ENCODE measurements at regions of chr1 and their contacts with region 1.

Region 1: DNA sequence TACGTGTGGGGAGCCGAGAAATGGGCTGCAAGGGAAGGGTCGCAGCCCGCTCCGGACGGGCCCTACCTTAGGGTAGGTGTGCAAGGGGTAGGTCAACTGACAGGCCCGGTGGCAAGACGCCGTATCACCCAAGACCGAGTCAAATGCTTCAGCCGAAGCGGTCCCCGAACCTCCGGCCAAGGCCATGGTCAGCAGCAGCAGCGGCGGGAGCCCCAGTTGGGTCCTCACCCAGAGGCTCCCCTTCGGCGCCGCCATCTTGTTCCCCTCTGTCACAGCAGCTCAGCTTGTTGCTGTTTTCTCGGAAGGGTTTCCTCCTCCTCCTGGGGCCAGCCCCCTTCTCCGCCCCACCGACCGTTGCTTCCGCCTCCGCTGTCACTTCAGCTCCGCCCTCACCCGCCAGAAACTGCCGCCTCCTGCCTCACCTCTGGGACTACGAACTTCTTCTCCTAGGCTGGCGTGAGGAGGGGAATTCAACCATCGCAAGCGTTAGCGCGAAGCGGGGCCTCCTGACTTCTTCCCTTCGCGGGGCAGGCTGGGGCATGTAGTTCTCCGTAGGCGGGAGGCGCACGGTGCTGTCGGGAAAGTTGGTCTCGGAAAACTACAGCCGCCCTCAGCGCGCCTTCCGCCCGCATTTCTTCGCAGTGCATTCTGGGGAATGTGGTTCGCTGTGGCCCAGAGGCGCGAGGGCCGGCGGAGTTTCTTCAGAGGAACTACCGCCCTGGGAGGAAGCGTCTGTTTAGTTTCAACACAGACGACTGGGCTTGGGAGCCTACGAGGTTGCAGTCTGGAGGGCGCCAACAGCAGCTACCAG is at the starts of genes TCEANC2 and TMEM59:
- DNase-seq: peak; percentile 97 to 98
- ATAC-seq: peak; percentile 93 to 94
- H3K4me3 ChIP-seq: peak within 1 kb of the TSS; percentile 82 to 99 (median 96)
- H3K27ac ChIP-seq: peak within 1 kb of the TSS; percentile 98 to 99 (median 98)
- H3K4me1 ChIP-seq: peaks cover 49% of the 10 kb centered on the region in 2 donors
- H3K27me3 ChIP-seq: no peaks in the 10 kb centered on the region
- CTCF ChIP-seq: peak in 1 of 5 experiments; percentile 10
- POLR2A ChIP-seq: peak; percentile 80 to 85
- total RNA-seq, gene TCEANC2: 2.6 to 9.5 (median 7.0) TPM
- total RNA-seq, gene TMEM59: 156 to 248 (median 224) TPM

Region 2: DNA sequence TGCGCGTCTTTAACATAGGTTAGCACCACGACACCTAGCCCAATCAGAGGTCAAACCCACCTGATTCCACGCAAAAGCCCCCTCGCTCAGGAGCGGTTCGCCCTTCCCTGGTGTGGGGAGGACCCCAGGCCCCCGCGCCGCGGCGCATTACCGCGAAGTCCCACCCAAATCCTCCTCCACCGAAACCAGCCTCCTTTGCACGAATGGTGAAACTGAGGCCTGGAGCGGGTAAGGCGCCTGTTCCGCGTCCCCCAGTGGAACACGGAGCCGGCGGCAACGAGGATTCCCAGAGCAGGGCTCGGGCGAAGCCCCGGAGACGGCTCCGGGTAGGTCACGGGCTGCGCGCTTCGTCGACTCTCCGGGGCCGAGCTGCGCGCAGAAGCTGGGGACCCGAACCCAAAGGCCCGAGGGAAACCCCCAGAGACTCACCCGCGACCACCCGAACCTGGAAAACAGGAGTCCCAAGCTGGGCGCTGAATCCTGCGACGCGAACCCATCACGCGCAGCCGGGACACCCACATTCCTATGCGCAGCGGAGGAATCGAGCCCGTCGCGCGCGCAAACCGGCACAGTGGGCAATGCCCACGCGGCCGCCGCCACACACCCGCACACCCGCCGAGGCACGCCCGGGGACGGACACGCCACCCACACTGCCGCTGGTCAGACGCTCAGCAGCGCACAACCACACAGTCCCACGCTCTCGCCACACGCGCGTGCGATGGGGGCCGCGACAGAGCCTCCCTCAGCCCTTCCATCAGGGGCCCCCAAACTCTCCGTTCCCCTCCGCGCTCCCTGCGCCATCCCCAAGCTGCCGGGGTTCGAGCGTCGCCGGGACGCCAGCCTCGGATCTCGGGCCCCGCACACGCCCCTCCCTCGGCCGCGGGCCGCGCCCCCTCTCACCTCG is 314.7 kb before region 1 on chr1:
- in situ Hi-C with region 1: no loop called
- intact Hi-C with region 1: no loop called
- DNase-seq: no peak
- ATAC-seq: peak; percentile 27 to 47
- H3K4me3 ChIP-seq: peak overlapping the region; percentile 54 to 65 (median 62)
- H3K27ac ChIP-seq: no peak overlapping the region
- H3K4me1 ChIP-seq: peaks cover 10 to 14% of the 10 kb centered on the region in 2 donors
- H3K27me3 ChIP-seq: peaks cover 10 to 40% (median 31%) of the 10 kb centered on the region in 3 donors
- CTCF ChIP-seq: no peak
- POLR2A ChIP-seq: no peak

Region 3: GRCh38 chr1:53837924-53838652 is 215.1 kb before region 1 on chr1 and contains the start of gene NDC1:
- in situ Hi-C with region 1: loop called in 1 of 4 experiments (anchors 5 kb)
- intact Hi-C with region 1: loop called (anchors 1 kb)
- DNase-seq: peak; percentile 86 to 89
- ATAC-seq: peak; percentile 99 to 100
- H3K4me3 ChIP-seq: peak within 1 kb of the TSS; percentile 76 to 89 (median 86)
- H3K27ac ChIP-seq: peak within 1 kb of the TSS; percentile 93 to 99 (median 96)
- H3K4me1 ChIP-seq: peaks cover 13 to 16% of the 10 kb centered on the region in 2 donors
- H3K27me3 ChIP-seq: no peaks in the 10 kb centered on the region
- CTCF ChIP-seq: peak in 4 of 5 experiments; percentile 22 to 42 (median 33)
- POLR2A ChIP-seq: peak; percentile 53 to 70
- total RNA-seq, gene NDC1: 7.6 to 27.0 (median 9.5) TPM

Region 4: GRCh38 chr1:53959664-53960250 is 93.4 kb before region 1 on chr1:
- in situ Hi-C with region 1: no loop called
- intact Hi-C with region 1: no loop called
- DNase-seq: no peak
- ATAC-seq: no peak
- H3K4me3 ChIP-seq: no peak overlapping the region
- H3K27ac ChIP-seq: no peak overlapping the region
- H3K4me1 ChIP-seq: no peaks in the 10 kb centered on the region
- H3K27me3 ChIP-seq: no peaks in the 10 kb centered on the region
- CTCF ChIP-seq: peak in 3 of 5 experiments; percentile 30 to 46 (median 39)
- POLR2A ChIP-seq: no peak

Region 5: DNA sequence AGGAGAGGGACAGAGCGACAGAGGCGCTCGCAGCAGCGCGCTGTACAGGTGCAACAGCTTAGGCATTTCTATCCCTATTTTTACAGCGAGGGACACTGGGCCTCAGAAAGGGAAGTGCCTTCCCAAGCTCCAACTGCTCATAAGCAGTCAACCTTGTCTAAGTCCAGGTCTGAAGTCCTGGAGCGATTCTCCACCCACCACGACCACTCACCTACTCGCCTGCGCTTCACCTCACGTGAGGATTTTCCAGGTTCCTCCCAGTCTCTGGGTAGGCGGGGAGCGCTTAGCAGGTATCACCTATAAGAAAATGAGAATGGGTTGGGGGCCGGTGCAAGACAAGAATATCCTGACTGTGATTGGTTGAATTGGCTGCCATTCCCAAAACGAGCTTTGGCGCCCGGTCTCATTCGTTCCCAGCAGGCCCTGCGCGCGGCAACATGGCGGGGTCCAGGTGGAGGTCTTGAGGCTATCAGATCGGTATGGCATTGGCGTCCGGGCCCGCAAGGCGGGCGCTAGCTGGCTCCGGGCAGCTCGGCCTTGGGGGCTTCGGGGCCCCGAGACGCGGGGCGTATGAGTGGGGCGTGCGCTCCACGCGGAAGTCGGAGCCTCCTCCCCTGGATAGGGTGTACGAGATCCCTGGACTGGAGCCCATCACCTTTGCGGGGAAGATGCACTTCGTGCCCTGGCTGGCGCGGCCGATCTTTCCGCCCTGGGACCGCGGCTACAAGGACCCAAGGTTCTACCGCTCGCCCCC is 146.8 kb after region 1 on chr1 and contains the starts of genes CYB5RL and MRPL37:
- in situ Hi-C with region 1: no loop called
- intact Hi-C with region 1: loop called (anchors 2 kb)
- DNase-seq: peak; percentile 94 to 95
- ATAC-seq: peak; percentile 99
- H3K4me3 ChIP-seq: peak within 1 kb of the TSS; percentile 94 to 100 (median 97)
- H3K27ac ChIP-seq: peak within 1 kb of the TSS; percentile 93 to 97 (median 96)
- H3K4me1 ChIP-seq: peaks cover 18 to 22% of the 10 kb centered on the region in 2 donors
- H3K27me3 ChIP-seq: no peaks in the 10 kb centered on the region
- CTCF ChIP-seq: no peak
- POLR2A ChIP-seq: peak; percentile 65 to 78
- total RNA-seq, gene CYB5RL: 1.8 to 5.8 (median 3.4) TPM
- total RNA-seq, gene MRPL37: 91.6 to 141 (median 121) TPM

Measured in gastrocnemius medialis (tissue), 4 donors.